Activated CD4-positive, alpha-beta T cell treated with anti-CD3 and anti-CD28 coated beads for 36 hours (primary cell): ENCODE measurements at regions of chr15 and their contacts with region 1.

Region 1: DNA sequence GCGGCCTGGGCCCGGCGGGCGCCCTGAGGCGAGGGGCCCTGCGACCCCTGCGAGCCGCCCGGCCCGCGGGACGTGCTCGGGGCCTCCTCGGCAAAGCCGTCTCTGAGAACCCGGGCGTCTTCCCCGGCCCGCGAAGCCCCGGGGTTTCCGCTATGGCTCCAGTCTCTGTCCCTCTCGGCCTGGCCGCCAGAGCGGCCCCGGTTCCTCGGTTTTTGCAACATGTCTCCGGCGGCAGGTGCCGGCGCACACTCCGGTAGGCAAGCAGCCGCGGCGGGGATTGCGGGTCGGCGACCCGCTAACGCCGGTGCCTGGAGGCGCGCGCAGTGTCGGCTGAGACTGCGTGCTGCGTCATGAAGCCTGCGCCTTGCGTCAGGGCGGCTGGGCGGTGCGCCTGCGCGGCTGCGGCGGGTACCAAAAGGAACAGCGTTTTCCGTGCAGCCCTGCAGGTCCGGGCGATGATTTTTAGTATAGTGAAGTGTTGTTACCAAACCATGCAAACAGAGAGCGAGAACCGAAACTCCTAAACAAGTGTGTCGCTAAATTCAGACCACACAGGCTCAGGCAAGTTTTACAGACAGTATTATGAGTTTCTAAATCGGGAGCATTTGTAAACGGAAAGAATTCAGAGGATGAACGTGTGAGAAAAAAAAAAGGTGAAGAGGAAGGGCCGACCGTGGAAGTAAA is at the start of gene NSMCE3:
- DNase-seq: peak; percentile 95
- ATAC-seq: peak; percentile 93
- H3K4me3 Mint-ChIP-seq: peak within 1 kb of the TSS; percentile 82
- H3K27ac Mint-ChIP-seq: peak within 1 kb of the TSS; percentile 99
- H3K4me1 Mint-ChIP-seq: peaks cover 34% of the 10 kb centered on the region
- H3K27me3 Mint-ChIP-seq: no peaks in the 10 kb centered on the region
- total RNA-seq, gene NSMCE3: 8.0 to 8.3 TPM

Region 2: GRCh38 chr15:28984421-28985315 is 285.0 kb before region 1 on chr15:
- CTCF ChIA-PET with region 1: no interaction called
- POLR2A ChIA-PET with region 1: no interaction called
- intact Hi-C with region 1: loop called in 1 of 2 experiments (anchors 10 kb)
- DNase-seq: peak; percentile 61
- ATAC-seq: peak; percentile 84
- H3K4me3 Mint-ChIP-seq: peak overlapping the region; percentile 36
- H3K27ac Mint-ChIP-seq: peak overlapping the region; percentile 78
- H3K4me1 Mint-ChIP-seq: peaks cover 37% of the 10 kb centered on the region
- H3K27me3 Mint-ChIP-seq: no peaks in the 10 kb centered on the region

Region 3: GRCh38 chr15:29018120-29018805 is 251.4 kb before region 1 on chr15:
- CTCF ChIA-PET with region 1: no interaction called
- POLR2A ChIA-PET with region 1: no interaction called
- intact Hi-C with region 1: loop called in 1 of 2 experiments (anchors 1 kb)
- DNase-seq: no peak
- ATAC-seq: no peak
- H3K4me3 Mint-ChIP-seq: no peak overlapping the region
- H3K27ac Mint-ChIP-seq: no peak overlapping the region
- H3K4me1 Mint-ChIP-seq: peaks cover 35% of the 10 kb centered on the region
- H3K27me3 Mint-ChIP-seq: no peaks in the 10 kb centered on the region

Region 4: GRCh38 chr15:29045717-29046116 is 223.9 kb before region 1 on chr15:
- CTCF ChIA-PET with region 1: no interaction called
- POLR2A ChIA-PET with region 1: no interaction called
- intact Hi-C with region 1: loop called in 1 of 2 experiments (anchors 5 kb)
- DNase-seq: peak; percentile 54
- ATAC-seq: peak; percentile 100
- H3K4me3 Mint-ChIP-seq: no peak overlapping the region
- H3K27ac Mint-ChIP-seq: peak overlapping the region; percentile 25
- H3K4me1 Mint-ChIP-seq: peaks cover 58% of the 10 kb centered on the region
- H3K27me3 Mint-ChIP-seq: no peaks in the 10 kb centered on the region

Region 5: GRCh38 chr15:29183071-29183831 is 86.4 kb before region 1 on chr15:
- CTCF ChIA-PET with region 1: no interaction called
- POLR2A ChIA-PET with region 1: no interaction called
- intact Hi-C with region 1: loop called in 1 of 2 experiments (anchors 1 kb)
- DNase-seq: no peak
- ATAC-seq: peak; percentile 81
- H3K4me3 Mint-ChIP-seq: no peak overlapping the region
- H3K27ac Mint-ChIP-seq: no peak overlapping the region
- H3K4me1 Mint-ChIP-seq: peaks cover 13% of the 10 kb centered on the region
- H3K27me3 Mint-ChIP-seq: peaks cover 24% of the 10 kb centered on the region

Region 6: GRCh38 chr15:29208352-29208751 is 61.3 kb before region 1 on chr15:
- CTCF ChIA-PET with region 1: no interaction called
- POLR2A ChIA-PET with region 1: no interaction called
- intact Hi-C with region 1: no loop called
- DNase-seq: no peak
- ATAC-seq: no peak
- H3K4me3 Mint-ChIP-seq: no peak overlapping the region
- H3K27ac Mint-ChIP-seq: no peak overlapping the region
- H3K4me1 Mint-ChIP-seq: no peaks in the 10 kb centered on the region
- H3K27me3 Mint-ChIP-seq: peaks cover 16% of the 10 kb centered on the region